ENCODE measurements at regions of chrX and their contacts with region 1.

Region 1: GRCh38 chrX:39772057-39772832 is 325.5 kb downstream of the BCOR start:
- DNase-seq: no peak
- H3K4me3 ChIP-seq: no peak overlapping the region
- H3K27ac ChIP-seq: peak overlapping the region; percentile 44 to 63 (median 54)
- H3K4me1 ChIP-seq: peaks cover 0 to 18% (median 11%) of the 10 kb centered on the region in 4 donors
- H3K27me3 ChIP-seq: no peaks in the 10 kb centered on the region
- CTCF ChIP-seq: no peak
- EP300 ChIP-seq: no peak
- POLR2A ChIP-seq: no peak

Region 2: GRCh38 chrX:39652336-39653131 is 119.7 kb before region 1 on chrX:
- intact Hi-C with region 1: no loop called
- DNase-seq: no peak
- H3K4me3 ChIP-seq: no peak overlapping the region
- H3K27ac ChIP-seq: no peak overlapping the region
- H3K4me1 ChIP-seq: no peaks in the 10 kb centered on the region
- H3K27me3 ChIP-seq: no peaks in the 10 kb centered on the region
- CTCF ChIP-seq: no peak
- EP300 ChIP-seq: no peak
- POLR2A ChIP-seq: no peak

Region 3: GRCh38 chrX:39814391-39814790 is 42.1 kb after region 1 on chrX:
- intact Hi-C with region 1: loop called (anchors 5 kb)
- DNase-seq: no peak
- H3K4me3 ChIP-seq: no peak overlapping the region
- H3K27ac ChIP-seq: peak overlapping the region in 2 of 4 donors; percentile 43 to 44
- H3K4me1 ChIP-seq: peaks cover 0 to 6% (median 0%) of the 10 kb centered on the region in 4 donors
- H3K27me3 ChIP-seq: no peaks in the 10 kb centered on the region
- CTCF ChIP-seq: peak in 3 of 4 experiments; percentile 13 to 26 (median 23)
- EP300 ChIP-seq: no peak
- POLR2A ChIP-seq: no peak

Region 4: GRCh38 chrX:40031911-40032310 is 259.7 kb after region 1 on chrX:
- intact Hi-C with region 1: no loop called
- DNase-seq: no peak
- H3K4me3 ChIP-seq: no peak overlapping the region
- H3K27ac ChIP-seq: no peak overlapping the region
- H3K4me1 ChIP-seq: no peaks in the 10 kb centered on the region
- H3K27me3 ChIP-seq: no peaks in the 10 kb centered on the region
- CTCF ChIP-seq: no peak
- EP300 ChIP-seq: no peak
- POLR2A ChIP-seq: no peak

Measured in sigmoid colon (tissue), 7 donors.